Prostate gland (tissue), 2 donors: ENCODE measurements at regions of chr2 and their contacts with region 1.

Region 1: DNA sequence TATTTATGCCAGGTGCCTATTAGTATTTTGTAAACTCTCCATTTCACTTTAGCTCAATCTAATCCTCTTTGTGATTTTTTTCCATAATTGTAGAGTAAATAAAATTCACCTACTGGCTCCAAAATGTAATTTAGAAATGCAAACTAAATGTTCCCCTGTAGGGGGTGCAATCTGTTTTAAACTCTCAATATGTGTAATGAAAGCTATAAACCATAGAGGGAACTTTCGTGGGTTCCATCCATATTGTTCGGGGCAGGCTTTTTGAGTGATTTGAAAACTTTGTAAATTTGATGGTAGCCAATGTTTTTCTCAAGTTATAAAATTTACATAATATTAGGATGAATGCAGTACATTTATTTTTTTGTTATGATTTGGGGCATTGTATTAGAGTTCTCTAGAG is 49.4 kb downstream of the TSPYL6 start:
- DNase-seq: no peak
- H3K4me3 ChIP-seq: no peak overlapping the region
- H3K27ac ChIP-seq: no peak overlapping the region
- H3K4me1 ChIP-seq: peaks cover 4% of the 10 kb centered on the region
- H3K27me3 ChIP-seq: no peaks in the 10 kb centered on the region
- CTCF ChIP-seq: peak in 3 of 4 experiments; percentile 49 to 55 (median 51)
- POLR2A ChIP-seq: no peak

Region 2: DNA sequence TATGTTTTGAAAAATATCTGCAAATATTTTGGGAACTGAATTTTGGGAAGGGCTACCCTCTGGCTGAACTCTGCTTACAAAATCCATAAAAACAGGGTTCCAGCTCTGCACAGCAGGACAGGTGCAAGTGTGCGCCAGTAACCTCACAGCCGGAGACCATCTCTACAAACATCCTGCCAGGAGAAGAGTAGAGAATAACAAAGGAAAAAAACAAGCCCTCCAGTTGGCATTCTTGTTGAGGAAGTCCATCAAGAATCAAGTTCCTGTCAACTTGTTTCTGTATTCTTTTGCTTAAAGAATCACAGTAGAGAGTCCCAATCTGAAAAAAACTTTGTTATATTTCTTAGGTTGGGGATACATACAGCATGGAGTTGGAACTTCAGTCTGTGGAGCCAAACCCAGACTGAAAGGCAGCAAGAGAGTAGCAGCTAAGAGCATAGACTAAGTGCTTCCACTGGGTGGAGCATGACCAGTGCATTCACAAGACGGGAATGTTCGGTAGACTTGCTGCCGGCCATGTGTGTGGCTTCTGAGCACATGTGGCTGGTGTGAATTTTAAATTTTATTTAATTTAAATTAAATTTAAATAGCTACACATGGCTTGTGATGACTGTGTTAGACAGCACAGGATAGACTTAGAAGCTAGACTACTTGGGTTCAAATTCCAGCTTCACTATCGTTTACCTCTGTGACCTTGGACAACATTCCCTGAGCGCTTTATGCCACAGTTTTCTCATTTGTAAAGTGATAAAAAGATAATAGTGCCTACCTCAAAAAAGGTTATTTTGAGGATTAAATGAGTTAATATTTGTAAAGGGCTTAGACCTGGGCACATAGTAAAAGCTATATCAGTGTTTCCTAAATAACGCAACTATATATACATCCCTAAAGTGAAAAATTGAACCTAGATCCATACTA is 291.4 kb after region 1 on chr2:
- intact Hi-C with region 1: loop called (anchors 10 kb)
- DNase-seq: no peak
- H3K4me3 ChIP-seq: no peak overlapping the region
- H3K27ac ChIP-seq: no peak overlapping the region
- H3K4me1 ChIP-seq: peaks cover 2% of the 10 kb centered on the region
- H3K27me3 ChIP-seq: no peaks in the 10 kb centered on the region
- CTCF ChIP-seq: no peak
- POLR2A ChIP-seq: no peak

Region 3: DNA sequence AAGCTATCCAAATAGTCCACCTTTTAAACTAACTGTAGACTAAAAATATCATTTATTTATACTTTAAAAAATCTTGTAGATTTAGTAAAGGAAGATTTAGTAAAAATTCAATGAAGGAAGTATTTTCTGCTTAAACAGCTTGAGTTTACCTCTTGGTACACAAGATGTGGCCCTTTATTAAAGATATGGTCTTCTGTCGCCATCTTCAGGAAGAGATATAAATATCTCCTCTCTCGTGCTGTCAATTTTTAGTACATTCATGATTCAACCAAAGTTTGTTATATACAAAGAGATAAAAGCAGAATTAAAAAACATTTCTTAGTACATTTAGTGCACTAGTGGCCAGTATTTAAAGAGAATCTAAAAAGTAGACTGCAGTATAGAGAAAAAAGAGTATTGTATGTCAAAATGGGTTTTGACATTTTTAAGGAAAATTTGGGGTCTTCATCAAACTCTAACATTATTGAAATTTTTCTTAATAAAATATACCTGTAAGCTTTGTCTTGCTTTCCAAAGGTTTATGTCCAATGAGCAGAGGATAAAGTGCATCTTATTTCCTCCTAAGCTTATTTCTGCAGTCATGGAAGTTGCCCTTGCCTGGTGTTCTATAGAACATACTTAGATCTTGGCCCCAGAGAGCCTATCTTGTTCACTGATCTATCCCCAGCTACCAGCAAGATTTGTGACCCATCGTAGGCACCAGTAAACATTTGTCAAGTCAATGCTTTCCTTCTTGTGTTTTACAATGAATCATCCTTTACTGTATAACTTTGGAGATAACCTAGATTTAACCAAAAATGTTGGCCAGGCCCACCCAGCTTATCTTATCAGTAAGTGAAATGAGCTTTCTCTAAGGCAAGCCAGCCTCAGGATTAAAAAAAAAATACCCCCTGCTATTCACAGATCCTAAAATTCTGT is 498.4 kb after region 1 on chr2:
- intact Hi-C with region 1: loop called (anchors 10 kb)
- DNase-seq: no peak
- H3K4me3 ChIP-seq: no peak overlapping the region
- H3K27ac ChIP-seq: no peak overlapping the region
- H3K4me1 ChIP-seq: no peaks in the 10 kb centered on the region
- H3K27me3 ChIP-seq: no peaks in the 10 kb centered on the region
- CTCF ChIP-seq: peak in 3 of 4 experiments; percentile 48 to 83 (median 74)
- POLR2A ChIP-seq: no peak